ENCODE measurements at regions of chr5 and their contacts with region 1.

Region 1: GRCh38 chr5:149442563-149443182 is 63.6 kb upstream of the IL17B start:
- DNase-seq: peak; percentile 90
- H3K4me3 ChIP-seq: no peak overlapping the region
- H3K27ac ChIP-seq: peak overlapping the region; percentile 74 to 98 (median 90)
- H3K4me1 ChIP-seq: peaks cover 2 to 61% (median 50%) of the 10 kb centered on the region in 4 donors
- H3K27me3 ChIP-seq: no peaks in the 10 kb centered on the region
- CTCF ChIP-seq: peak; percentile 90 to 98 (median 95)
- EP300 ChIP-seq: no peak
- POLR2A ChIP-seq: no peak

Region 2: DNA sequence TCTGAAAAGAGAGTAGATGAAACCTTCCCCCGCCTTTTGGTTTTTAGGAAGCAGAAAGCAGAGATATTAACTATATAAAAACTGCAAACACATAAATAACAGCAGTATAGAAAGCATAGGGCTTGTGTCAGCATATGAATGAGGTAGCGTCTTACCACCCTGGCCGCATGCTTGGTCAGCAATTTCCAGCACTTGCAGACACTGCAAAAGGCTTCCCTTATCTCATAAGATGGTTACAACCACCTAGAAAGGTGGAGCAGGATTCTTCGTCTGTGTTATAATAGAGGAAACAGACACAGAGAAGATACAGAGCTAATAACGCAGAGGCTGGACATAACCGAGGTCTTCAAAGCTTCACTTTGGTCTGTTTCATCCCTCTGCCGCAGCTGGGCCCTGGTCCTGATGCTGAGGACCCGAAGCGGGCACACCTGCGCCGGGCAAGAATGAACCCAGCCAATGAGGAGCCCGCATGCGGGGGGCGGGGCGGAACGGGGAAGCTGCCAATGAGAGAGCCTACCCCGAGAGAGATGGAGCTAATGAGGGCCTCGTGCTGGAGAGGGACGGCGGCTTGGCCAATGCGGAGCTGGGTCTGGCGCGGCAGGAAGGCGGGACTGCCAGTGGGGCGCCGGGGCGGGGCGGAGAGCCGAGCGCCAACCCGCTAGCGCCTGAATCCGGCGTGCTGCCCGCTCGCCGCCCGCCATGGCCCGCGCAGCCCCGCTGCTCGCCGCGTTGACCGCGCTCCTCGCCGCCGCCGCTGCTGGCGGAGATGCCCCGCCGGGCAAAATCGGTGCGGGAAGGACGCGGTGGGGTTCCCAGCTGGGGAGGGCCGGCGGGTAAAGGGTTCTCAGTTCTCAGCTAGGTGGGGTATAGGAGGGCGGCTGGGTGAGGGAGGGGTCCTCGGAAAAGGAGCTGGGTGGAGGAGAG is 85.0 kb before region 1 on chr5 and contains the start of gene PCYOX1L:
- intact Hi-C with region 1: no loop called
- DNase-seq: peak; percentile 98
- H3K4me3 ChIP-seq: peak within 1 kb of the TSS; percentile 48 to 75 (median 57)
- H3K27ac ChIP-seq: peak within 1 kb of the TSS; percentile 61 to 76 (median 69)
- H3K4me1 ChIP-seq: peaks cover 0 to 14% (median 11%) of the 10 kb centered on the region in 4 donors
- H3K27me3 ChIP-seq: no peaks in the 10 kb centered on the region
- CTCF ChIP-seq: no peak
- EP300 ChIP-seq: no peak
- POLR2A ChIP-seq: no peak
- total RNA-seq, gene PCYOX1L: 2.5 to 3.9 (median 3.5) TPM

Region 3: GRCh38 chr5:149452665-149453617 is 10.3 kb after region 1 on chr5:
- intact Hi-C with region 1: no loop called
- DNase-seq: peak; percentile 93
- H3K4me3 ChIP-seq: no peak overlapping the region
- H3K27ac ChIP-seq: peak overlapping the region; percentile 86 to 98 (median 90)
- H3K4me1 ChIP-seq: peaks cover 0 to 90% (median 82%) of the 10 kb centered on the region in 4 donors
- H3K27me3 ChIP-seq: no peaks in the 10 kb centered on the region
- CTCF ChIP-seq: no peak
- EP300 ChIP-seq: no peak
- POLR2A ChIP-seq: no peak

Region 4: GRCh38 chr5:149485655-149486425 is 43.2 kb after region 1 on chr5:
- intact Hi-C with region 1: loop called (anchors 1 kb)
- DNase-seq: peak; percentile 96
- H3K4me3 ChIP-seq: no peak overlapping the region
- H3K27ac ChIP-seq: peak overlapping the region; percentile 86 to 92 (median 90)
- H3K4me1 ChIP-seq: peaks cover 0 to 97% (median 92%) of the 10 kb centered on the region in 4 donors
- H3K27me3 ChIP-seq: no peaks in the 10 kb centered on the region
- CTCF ChIP-seq: no peak
- EP300 ChIP-seq: peak; percentile 49 to 98 (median 97)
- POLR2A ChIP-seq: no peak

Region 5: GRCh38 chr5:149551200-149552037 is 108.7 kb after region 1 on chr5 and contains the start of gene CSNK1A1:
- intact Hi-C with region 1: loop called (anchors 2 kb)
- DNase-seq: peak; percentile 99
- H3K4me3 ChIP-seq: peak within 1 kb of the TSS; percentile 93 to 100 (median 98)
- H3K27ac ChIP-seq: peak within 1 kb of the TSS; percentile 99 to 100 (median 100)
- H3K4me1 ChIP-seq: peaks cover 0 to 34% (median 30%) of the 10 kb centered on the region in 4 donors
- H3K27me3 ChIP-seq: no peaks in the 10 kb centered on the region
- CTCF ChIP-seq: peak; percentile 73 to 97 (median 86)
- EP300 ChIP-seq: peak in 2 of 4 donors; percentile 5 to 67
- POLR2A ChIP-seq: peak; percentile 89 to 91
- total RNA-seq, gene CSNK1A1: 214 to 298 (median 231) TPM

Region 6: DNA sequence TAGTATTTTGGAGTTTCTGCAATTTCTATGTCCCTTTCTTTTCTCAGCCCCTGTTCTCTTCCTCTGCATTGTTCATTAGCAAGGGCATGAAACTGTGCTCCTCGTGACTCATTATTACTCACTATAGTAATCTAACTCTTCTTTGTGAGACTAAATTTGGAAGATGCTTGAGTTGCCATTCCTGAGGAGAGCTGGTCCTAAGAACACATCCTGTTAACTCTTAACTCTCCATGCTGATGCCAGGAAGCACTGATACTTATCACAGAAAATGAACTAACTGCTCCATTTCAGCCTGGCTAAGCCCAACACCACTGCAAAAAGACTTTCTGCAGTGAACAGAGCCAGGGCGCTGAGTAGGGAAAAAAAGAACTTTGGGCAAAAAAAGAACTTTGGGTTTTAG is 119.2 kb after region 1 on chr5:
- intact Hi-C with region 1: loop called (anchors 1 kb)
- DNase-seq: no peak
- H3K4me3 ChIP-seq: peak overlapping the region in 1 of 4 donors; percentile 10
- H3K27ac ChIP-seq: peak overlapping the region; percentile 78 to 91 (median 84)
- H3K4me1 ChIP-seq: peaks cover 0 to 43% (median 38%) of the 10 kb centered on the region in 4 donors
- H3K27me3 ChIP-seq: no peaks in the 10 kb centered on the region
- CTCF ChIP-seq: no peak
- EP300 ChIP-seq: peak in 2 of 4 donors; percentile 27 to 59
- POLR2A ChIP-seq: no peak